Activated T-helper 1 cell treated with anti-CD3 and anti-CD28 coated beads, Interleukin-12 subunit alpha, Interleukin-12 subunit beta, Interleukin-2, Interleukin-4 antibody, amounts not matched to agents 30 ng/mL and 10 ng/mL and 1 ng/mL, durations not matched to agents 14 hours and 24 hours and 36 hours (primary cell): ENCODE measurements at regions of chr5 and their contacts with region 1.

Region 1: DNA sequence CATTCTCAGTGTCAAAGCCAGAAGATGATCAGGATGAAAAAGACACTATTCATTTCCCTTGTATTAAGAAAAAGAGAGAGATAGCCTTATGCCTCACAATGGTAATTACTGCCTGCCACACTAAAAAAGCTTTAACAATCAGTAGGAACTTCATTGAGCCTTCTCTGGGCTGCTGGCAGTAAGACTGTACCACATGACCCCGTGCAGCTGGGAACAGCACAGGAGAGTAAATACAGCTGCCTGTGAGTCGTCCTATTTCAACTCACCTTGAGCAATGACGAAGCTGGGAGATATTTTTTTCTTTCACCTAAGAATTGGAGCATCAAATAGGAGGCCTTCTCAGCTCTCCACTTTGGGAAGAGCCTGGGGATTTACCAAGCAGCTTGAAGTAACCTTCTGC is 316.3 kb downstream of the GABRB2 start:
- DNase-seq: no peak
- H3K4me3 Mint-ChIP-seq: no peak overlapping the region
- H3K27ac Mint-ChIP-seq: no peak overlapping the region
- H3K4me1 Mint-ChIP-seq: no peaks in the 10 kb centered on the region
- H3K27me3 Mint-ChIP-seq: no peaks in the 10 kb centered on the region

Region 2: DNA sequence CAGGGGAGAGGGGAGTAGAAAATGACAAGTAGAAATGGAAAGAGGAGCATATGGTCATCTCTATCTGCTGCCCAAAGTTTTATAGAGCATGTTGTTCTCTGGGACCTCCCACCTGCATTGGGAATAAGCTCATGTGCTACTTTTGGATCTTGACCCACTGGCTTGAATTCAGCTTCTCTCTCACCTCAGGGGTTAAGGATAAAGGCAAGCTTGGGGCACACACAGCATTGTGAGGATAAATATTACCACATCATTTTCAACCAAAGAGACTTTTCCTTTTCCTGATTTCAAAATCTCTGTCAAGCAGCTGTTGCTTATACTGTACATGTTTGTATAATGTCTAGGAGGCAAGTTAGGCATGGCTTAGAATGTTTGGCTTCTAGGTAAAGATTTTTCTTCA is 394.8 kb before region 1 on chr5:
- intact Hi-C with region 1: loop called (anchors 10 kb)
- DNase-seq: no peak
- H3K4me3 Mint-ChIP-seq: no peak overlapping the region
- H3K27ac Mint-ChIP-seq: no peak overlapping the region
- H3K4me1 Mint-ChIP-seq: no peaks in the 10 kb centered on the region
- H3K27me3 Mint-ChIP-seq: no peaks in the 10 kb centered on the region

Region 3: DNA sequence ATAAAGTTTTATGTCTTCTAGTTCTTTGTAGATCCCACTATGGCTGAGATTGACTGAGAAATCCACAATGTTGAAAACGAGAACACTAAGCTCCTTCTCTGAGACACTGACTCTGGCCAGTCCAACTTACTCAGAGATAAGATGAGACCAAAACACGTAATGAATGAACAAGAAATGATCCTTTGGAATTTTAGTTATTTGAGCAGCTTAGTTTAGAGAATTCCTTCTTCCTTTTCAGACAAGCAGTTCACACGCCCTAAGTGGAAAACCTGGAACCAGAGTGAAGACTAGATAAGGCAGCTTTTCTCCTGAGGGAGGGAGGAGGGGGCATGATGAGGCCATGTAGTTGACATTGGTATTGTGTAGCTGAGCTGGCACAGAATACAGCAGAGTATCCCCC is 176.7 kb after region 1 on chr5:
- intact Hi-C with region 1: no loop called
- DNase-seq: no peak
- H3K4me3 Mint-ChIP-seq: no peak overlapping the region
- H3K27ac Mint-ChIP-seq: no peak overlapping the region
- H3K4me1 Mint-ChIP-seq: no peaks in the 10 kb centered on the region
- H3K27me3 Mint-ChIP-seq: no peaks in the 10 kb centered on the region

Region 4: DNA sequence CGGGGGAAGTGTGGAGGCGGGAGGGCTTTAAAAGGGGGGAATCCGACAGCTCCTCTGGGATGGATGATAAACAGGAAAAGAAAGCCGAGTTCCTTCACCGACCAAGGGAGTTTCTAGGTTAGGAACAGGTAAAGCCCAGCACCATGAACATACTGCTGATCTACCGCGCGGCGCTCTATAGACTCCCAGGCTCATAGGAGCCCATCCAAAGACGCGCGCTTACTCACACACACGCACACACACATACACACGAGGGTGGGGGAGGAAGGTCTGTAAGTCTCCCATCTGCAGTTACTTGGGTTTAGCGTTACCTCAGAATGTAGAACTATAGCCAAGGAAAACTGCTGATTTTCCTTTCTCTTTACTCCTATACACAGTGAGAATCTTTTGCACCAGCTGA is 318.9 kb after region 1 on chr5:
- intact Hi-C with region 1: no loop called
- DNase-seq: no peak
- H3K4me3 Mint-ChIP-seq: no peak overlapping the region
- H3K27ac Mint-ChIP-seq: no peak overlapping the region
- H3K4me1 Mint-ChIP-seq: peaks cover 22% of the 10 kb centered on the region
- H3K27me3 Mint-ChIP-seq: peaks cover 44% of the 10 kb centered on the region